PC-9 (cell line): ENCODE measurements at regions of chr2 and their contacts with region 1.

Region 1: GRCh38 chr2:218876562-218877219 is 4.0 kb upstream of the WNT10A start:
- DNase-seq: peak in 1 of 2 experiments; percentile 77
- H3K4me3 ChIP-seq: no peak overlapping the region
- H3K27ac ChIP-seq: no peak overlapping the region
- H3K4me1 ChIP-seq: 0 out of 2 replicates have a peak, but pooled peaks cover 4% of the 10 kb centered on the region
- H3K27me3 ChIP-seq: no peaks in the 10 kb centered on the region
- CTCF ChIP-seq: peak; percentile 99

Region 2: GRCh38 chr2:218979846-218980734 is 103.4 kb after region 1 on chr2:
- CTCF ChIA-PET with region 1: interaction called, 3 read pairs
- POLR2A ChIA-PET with region 1: no interaction called
- intact Hi-C with region 1: loop called (anchors 5 kb)
- DNase-seq: peak; percentile 53 to 79
- H3K4me3 ChIP-seq: peak overlapping the region; percentile 51; the same call in 1 of the 2 replicates
- H3K27ac ChIP-seq: no peak overlapping the region
- H3K4me1 ChIP-seq: no peaks in the 10 kb centered on the region
- H3K27me3 ChIP-seq: peaks cover 37% of the 10 kb centered on the region
- CTCF ChIP-seq: peak; percentile 97

Region 3: DNA sequence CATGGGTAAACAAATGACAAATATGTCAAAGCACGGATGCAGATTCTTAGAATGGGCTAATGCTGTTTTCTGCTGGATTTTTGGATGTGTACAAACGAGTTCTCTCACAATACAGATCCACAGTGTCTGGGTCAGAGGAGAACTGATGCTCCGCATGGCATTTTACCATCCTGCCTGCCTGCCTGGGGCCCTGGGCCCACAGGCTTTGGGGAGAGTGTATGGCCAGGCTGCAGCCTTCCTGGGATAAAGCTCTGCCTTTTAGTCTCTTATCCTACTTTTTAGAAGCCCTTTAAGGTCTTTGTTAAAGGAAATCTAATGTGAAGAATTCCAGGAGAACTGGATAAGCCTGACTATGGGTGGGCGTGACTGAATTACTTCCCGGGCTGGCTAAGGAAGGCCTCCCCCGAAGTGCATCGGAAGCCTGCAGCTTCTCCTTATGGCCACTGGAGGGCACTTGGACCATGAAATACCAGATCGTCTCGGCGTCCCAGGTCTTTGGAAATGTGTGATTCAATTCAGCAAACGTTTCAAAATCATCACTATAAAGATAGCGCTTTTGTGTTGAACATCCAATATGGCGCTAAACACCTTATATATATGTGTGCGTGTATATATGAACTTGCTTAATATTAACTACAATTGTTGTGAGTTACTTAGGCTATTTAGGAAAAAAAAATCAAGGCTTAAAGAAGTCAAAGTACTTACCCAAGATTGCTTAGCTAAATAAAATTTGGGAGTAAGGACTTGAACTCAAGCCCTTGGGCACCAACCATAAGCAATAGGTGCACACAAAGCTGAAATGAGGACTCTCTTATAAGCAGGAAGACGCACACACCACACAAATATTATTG is 526.2 kb after region 1 on chr2:
- CTCF ChIA-PET with region 1: no interaction called
- POLR2A ChIA-PET with region 1: no interaction called
- intact Hi-C with region 1: no loop called
- DNase-seq: peak; percentile 67 to 78
- H3K4me3 ChIP-seq: no peak overlapping the region
- H3K27ac ChIP-seq: no peak overlapping the region
- H3K4me1 ChIP-seq: peaks cover 36% of the 10 kb centered on the region
- H3K27me3 ChIP-seq: no peaks in the 10 kb centered on the region
- CTCF ChIP-seq: peak; percentile 92

Region 4: GRCh38 chr2:219823574-219823973 is 946.9 kb after region 1 on chr2:
- CTCF ChIA-PET with region 1: interaction called, 14 read pairs
- POLR2A ChIA-PET with region 1: no interaction called
- intact Hi-C with region 1: no loop called
- DNase-seq: no peak
- H3K4me3 ChIP-seq: no peak overlapping the region
- H3K27ac ChIP-seq: no peak overlapping the region
- H3K4me1 ChIP-seq: no peaks in the 10 kb centered on the region
- H3K27me3 ChIP-seq: no peaks in the 10 kb centered on the region
- CTCF ChIP-seq: no peak